Pancreas (tissue), 10 donors: ENCODE measurements at regions of chr16 and their contacts with region 1.

Region 1: DNA sequence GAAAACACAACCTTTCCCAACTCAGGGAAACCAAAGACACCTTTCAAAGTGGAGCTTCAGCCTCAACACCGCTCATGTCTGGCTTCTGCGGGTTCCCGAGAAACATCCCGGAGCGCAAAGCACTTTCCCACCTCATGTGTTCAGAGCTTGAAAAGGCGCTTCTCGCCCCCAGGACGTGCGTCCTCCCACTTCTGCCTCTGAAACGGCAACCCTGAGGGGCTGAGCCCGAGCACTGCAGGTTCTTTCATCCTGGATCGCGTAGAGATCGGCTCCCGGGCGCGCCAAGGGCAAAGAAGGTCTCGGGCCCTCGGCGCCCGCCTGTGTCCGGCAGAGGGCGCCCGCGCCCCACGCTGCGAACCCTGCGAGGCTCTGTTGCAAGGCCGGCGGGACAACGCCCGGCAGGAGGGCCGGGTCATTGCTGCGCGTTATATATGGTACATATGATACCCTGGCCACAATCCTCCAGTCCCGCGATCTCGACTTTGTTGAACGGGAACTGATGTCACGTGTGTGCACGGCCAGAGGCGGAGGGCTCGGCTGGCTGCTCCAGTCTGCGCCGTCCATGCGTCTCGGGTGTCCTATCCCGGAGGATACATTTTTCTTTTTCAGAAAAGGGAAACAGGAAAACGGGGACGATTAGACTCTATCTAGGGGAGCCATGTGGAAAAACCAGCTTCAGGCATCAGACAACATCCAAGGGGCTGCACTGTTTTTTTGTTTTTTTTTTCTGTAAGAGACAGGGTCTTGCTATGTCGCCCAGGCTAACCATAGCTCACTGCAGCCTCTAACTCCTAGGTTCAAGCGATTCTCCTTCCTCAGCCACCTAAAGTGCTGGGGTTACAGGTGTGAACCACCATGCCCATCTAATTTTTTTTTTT is 19.1 kb downstream of the COQ7 start:
- DNase-seq: peak; percentile 68 to 98 (median 86)
- ATAC-seq: peak; percentile 98 to 100 (median 99)
- H3K4me3 ChIP-seq: peak overlapping the region in 2 of 4 donors; percentile 24 to 44
- H3K27ac ChIP-seq: no peak overlapping the region
- H3K4me1 ChIP-seq: peaks cover 0 to 5% (median 0%) of the 10 kb centered on the region in 3 donors
- H3K27me3 ChIP-seq: no peaks in the 10 kb centered on the region
- CTCF ChIP-seq: peak; percentile 96 to 100 (median 98)

Region 2: DNA sequence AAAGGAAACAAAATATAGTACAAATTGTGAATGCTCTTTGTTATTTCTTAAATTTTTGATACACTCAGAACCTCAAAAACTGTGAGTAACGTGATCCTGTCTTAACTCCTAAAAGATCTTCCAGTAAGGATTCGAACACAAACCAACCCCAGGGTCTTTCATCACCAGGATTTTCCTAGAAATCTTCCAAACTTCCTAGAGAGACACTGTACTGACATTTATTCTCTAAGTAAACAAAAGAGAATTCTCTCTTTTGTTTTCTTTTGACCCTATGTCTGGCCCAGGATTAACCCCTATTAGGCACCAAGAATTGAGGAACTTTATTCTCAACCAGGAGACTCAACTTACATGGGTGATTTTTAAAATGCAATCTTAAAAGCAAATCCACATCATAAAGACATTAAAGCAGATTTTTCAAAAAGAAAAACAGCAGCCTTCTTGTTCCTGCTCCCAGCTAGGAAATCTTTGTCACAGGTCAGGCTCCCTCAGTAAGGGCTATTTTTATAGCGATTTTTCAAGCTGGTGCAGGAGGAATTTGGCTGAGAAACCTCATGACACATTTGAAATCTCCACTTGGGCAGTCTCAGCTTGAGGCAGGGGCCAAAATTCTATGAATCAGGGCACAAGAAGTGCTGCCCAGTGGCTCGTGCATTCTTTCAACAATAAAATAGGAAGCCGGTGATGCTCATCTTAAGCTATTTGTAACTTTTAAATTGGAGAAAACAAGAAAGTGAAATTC is 154.1 kb before region 1 on chr16:
- intact Hi-C with region 1: no loop called
- DNase-seq: no peak
- ATAC-seq: no peak
- H3K4me3 ChIP-seq: no peak overlapping the region
- H3K27ac ChIP-seq: no peak overlapping the region
- H3K4me1 ChIP-seq: no peaks in the 10 kb centered on the region
- H3K27me3 ChIP-seq: no peaks in the 10 kb centered on the region
- CTCF ChIP-seq: no peak

Region 3: DNA sequence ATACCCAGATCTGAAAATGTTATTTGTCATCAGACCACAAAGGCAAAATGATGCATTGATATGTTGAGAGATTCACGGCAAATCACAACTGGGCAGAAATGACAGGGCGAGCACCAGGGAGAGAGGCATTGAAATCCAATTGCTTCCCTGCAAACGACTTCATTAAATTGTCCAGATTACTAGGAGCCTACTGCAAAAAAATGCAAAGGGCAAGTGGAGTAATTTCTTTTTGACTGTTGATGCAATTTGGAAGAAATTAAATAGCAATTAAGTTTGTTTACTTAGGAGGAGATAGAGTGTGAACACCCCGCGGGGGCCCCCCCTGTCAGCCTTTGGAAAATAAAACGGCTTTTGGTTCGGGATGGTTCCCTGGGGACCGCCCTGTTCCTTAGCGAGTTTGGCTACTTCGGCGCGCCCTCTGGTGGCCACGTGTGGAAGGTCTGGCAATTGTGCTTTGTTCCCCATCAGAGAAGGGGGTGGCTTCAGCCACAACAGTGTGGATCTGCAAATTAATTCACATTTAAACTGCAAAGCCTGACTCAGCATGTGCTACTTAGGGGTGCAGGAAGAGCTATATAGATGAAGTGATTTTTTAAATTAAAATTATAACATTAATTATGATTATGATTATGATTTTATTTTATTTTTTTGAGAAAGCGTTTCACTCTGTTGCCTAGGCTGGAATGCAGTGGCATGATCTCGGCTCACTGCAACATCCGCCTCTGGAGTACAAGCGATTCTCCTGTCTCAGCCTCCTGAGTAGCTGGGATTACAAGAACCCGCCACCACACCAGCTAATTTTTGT is 117.3 kb before region 1 on chr16:
- intact Hi-C with region 1: no loop called
- DNase-seq: peak; percentile 52 to 95 (median 80)
- ATAC-seq: peak; percentile 87 to 100 (median 96)
- H3K4me3 ChIP-seq: peak overlapping the region in 1 of 4 donors; percentile 11
- H3K27ac ChIP-seq: no peak overlapping the region
- H3K4me1 ChIP-seq: no peaks in the 10 kb centered on the region
- H3K27me3 ChIP-seq: no peaks in the 10 kb centered on the region
- CTCF ChIP-seq: peak; percentile 82 to 95 (median 88)

Region 4: DNA sequence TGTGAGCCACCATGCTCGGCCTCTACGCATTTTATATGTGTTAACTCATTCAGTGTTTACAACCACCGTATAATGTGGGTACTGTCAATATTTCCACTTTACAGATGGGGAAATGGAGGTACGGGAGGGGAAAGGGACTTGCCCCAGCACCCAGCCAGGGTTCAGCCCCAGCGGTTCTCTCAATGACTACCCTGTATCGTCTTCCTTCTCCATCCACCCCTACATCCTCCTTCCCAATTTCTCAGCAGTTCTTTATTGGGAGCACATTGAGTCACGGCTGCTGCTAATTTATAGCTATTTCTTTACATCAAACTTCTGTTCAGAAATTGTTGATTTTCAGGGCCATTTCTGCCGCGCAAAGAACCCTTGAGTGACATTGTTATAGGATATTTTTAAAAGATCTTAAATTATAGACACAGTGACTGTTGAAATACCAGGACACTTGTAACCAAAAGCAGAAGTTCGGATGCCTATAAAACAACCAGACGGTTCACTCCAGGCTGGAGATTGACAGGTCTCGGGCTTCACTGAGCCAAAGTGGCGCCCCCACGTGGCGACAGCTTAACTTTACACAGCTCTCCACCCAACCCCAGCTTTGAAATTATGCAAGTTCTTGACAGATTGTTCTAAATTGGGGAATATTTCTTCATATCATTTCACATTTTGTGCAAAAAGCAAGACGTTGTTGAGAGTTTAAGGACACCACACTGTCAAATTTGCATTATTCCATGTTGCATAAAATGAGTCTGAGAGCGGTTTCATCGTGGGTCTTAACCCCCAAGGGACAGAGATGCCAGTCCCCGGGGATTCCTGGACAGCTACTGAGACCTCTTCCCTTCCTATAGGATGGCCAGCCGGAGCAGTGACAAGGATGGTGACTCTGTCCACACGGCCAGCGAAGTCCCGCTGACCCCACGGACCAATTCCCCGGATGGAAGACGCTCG is 93.3 kb after region 1 on chr16:
- intact Hi-C with region 1: loop called in 1 of 3 experiments (anchors 5 kb)
- DNase-seq: peak in 5 of 6 donors; percentile 18 to 84 (median 62)
- ATAC-seq: peak; percentile 71 to 89 (median 80)
- H3K4me3 ChIP-seq: no peak overlapping the region
- H3K27ac ChIP-seq: no peak overlapping the region
- H3K4me1 ChIP-seq: peaks cover 0 to 3% (median 0%) of the 10 kb centered on the region in 3 donors
- H3K27me3 ChIP-seq: no peaks in the 10 kb centered on the region
- CTCF ChIP-seq: peak; percentile 54 to 75 (median 64)

Region 5: GRCh38 chr16:19366391-19366790 is 279.8 kb after region 1 on chr16:
- intact Hi-C with region 1: loop called in 2 of 3 experiments (anchors 5 kb)
- DNase-seq: no peak
- ATAC-seq: no peak
- H3K4me3 ChIP-seq: no peak overlapping the region
- H3K27ac ChIP-seq: no peak overlapping the region
- H3K4me1 ChIP-seq: no peaks in the 10 kb centered on the region
- H3K27me3 ChIP-seq: no peaks in the 10 kb centered on the region
- CTCF ChIP-seq: no peak